MCF 10A (cell line): ENCODE measurements at regions of chr15 and their contacts with region 1.

Region 1: GRCh38 chr15:72722071-72722696 is 36.2 kb downstream of the BBS4 start:
- DNase-seq: peak; percentile 64
- H3K4me3 Mint-ChIP-seq: no peak overlapping the region
- H3K27ac Mint-ChIP-seq: no peak overlapping the region
- H3K4me1 Mint-ChIP-seq: no peaks in the 10 kb centered on the region
- H3K27me3 Mint-ChIP-seq: no peaks in the 10 kb centered on the region
- CTCF ChIP-seq: peak; percentile 84

Region 2: DNA sequence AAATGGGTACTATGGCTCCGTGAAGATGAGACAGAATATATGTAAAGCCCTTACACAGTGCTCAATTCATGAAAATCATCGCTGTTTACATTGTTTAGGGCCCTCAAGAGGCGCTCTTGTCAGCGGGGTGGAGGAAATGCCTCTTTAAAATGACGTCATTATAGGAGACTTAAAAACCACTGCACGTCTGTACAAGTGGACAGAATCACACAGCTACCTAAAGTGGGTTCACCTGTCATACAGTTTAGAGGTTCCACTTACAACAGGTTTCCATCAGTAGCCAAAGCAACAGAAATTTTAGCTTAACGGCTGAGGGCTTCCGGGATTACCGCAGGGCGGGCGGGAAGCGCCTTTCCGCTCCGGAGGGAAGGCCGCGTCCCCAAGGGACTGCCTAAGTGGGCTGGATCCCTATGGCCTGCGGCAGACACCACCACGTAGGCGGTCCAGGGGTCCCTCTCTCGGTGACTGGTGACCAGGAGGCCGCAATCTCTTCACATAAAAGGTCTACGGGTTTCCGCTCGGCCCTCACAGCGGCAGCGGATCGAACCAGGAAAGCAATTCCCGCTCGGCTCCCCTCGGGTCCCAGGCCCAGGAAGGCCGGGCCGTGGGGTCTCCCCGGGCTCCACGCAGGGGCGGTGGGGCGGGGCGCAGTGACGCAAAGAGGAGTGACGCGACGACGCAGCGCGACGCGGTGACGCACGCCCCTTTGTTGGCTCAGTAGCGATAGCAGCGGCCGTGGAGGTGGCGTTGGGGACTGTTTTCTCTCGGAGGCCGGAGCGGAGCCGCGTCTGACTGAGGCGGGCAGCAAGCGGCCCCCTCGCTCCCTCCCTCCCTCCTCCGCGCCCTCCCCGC is 248.3 kb before region 1 on chr15 and contains the start of gene ARIH1:
- CTCF ChIA-PET with region 1: no interaction called
- POLR2A ChIA-PET with region 1: no interaction called
- intact Hi-C with region 1: no loop called
- DNase-seq: peak; percentile 94
- H3K4me3 Mint-ChIP-seq: peak within 1 kb of the TSS; percentile 91
- H3K27ac Mint-ChIP-seq: peak within 1 kb of the TSS; percentile 100
- H3K4me1 Mint-ChIP-seq: peaks cover 6% of the 10 kb centered on the region
- H3K27me3 Mint-ChIP-seq: no peaks in the 10 kb centered on the region
- CTCF ChIP-seq: peak; percentile 32
- total RNA-seq, gene ARIH1: 234 and 235 TPM in 2 replicates

Region 3: GRCh38 chr15:72732516-72732915 is 10.3 kb after region 1 on chr15:
- CTCF ChIA-PET with region 1: interaction called, 26 read pairs
- POLR2A ChIA-PET with region 1: interaction called, 6 read pairs
- intact Hi-C with region 1: no loop called
- DNase-seq: no peak
- H3K4me3 Mint-ChIP-seq: no peak overlapping the region
- H3K27ac Mint-ChIP-seq: no peak overlapping the region
- H3K4me1 Mint-ChIP-seq: no peaks in the 10 kb centered on the region
- H3K27me3 Mint-ChIP-seq: no peaks in the 10 kb centered on the region
- CTCF ChIP-seq: no peak

Region 4: GRCh38 chr15:72740219-72740618 is 18.0 kb after region 1 on chr15:
- CTCF ChIA-PET with region 1: interaction called, 26 read pairs
- POLR2A ChIA-PET with region 1: interaction called, 6 read pairs
- intact Hi-C with region 1: no loop called
- DNase-seq: no peak
- H3K4me3 Mint-ChIP-seq: no peak overlapping the region
- H3K27ac Mint-ChIP-seq: no peak overlapping the region
- H3K4me1 Mint-ChIP-seq: no peaks in the 10 kb centered on the region
- H3K27me3 Mint-ChIP-seq: no peaks in the 10 kb centered on the region
- CTCF ChIP-seq: no peak

Region 5: GRCh38 chr15:73273181-73274002 is 551.2 kb after region 1 on chr15:
- CTCF ChIA-PET with region 1: interaction called, 6 read pairs
- POLR2A ChIA-PET with region 1: no interaction called
- intact Hi-C with region 1: loop called (anchors 1 kb)
- DNase-seq: peak; percentile 74
- H3K4me3 Mint-ChIP-seq: no peak overlapping the region
- H3K27ac Mint-ChIP-seq: no peak overlapping the region
- H3K4me1 Mint-ChIP-seq: no peaks in the 10 kb centered on the region
- H3K27me3 Mint-ChIP-seq: no peaks in the 10 kb centered on the region
- CTCF ChIP-seq: peak; percentile 71